KBM-7 (cell line): ENCODE measurements at regions of chr2 and their contacts with region 1.

Region 1: DNA sequence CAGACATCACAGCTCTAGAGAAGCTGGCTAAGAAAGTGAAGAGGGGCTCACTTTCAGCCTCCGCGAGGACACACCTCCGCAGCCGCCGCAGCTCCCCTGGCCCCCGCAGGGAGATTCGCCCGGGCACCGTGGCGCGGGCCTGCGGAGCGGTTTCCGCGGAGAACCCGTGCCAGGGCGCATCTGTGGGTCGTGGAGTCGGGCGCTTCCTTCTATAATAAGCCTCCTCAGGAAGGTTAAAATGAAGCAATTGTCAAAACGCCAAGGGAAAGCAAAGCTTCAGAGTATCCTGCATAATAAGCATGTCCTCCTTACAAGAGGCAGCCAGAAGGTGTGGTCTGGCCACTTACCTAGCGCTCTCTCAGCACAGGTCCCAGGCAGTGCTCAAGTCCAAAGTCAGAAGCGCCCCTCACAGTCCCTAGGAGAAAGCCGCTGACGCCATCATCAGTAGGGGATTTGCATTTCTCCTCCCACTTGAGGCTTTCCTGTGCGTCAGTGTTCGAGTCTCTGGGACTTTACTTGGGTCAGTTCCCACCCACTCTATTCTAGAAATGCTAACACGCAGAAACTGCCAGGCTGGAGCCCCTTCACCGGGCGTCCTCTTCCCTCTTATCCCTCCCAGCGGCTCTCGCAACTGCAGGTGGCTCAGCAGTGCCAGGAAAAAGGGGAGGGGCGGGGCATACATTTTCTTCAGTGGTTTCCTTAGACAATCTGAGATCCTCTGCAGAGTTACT is at the start of gene STAT4:
- DNase-seq: peak; percentile 86

Region 2: DNA sequence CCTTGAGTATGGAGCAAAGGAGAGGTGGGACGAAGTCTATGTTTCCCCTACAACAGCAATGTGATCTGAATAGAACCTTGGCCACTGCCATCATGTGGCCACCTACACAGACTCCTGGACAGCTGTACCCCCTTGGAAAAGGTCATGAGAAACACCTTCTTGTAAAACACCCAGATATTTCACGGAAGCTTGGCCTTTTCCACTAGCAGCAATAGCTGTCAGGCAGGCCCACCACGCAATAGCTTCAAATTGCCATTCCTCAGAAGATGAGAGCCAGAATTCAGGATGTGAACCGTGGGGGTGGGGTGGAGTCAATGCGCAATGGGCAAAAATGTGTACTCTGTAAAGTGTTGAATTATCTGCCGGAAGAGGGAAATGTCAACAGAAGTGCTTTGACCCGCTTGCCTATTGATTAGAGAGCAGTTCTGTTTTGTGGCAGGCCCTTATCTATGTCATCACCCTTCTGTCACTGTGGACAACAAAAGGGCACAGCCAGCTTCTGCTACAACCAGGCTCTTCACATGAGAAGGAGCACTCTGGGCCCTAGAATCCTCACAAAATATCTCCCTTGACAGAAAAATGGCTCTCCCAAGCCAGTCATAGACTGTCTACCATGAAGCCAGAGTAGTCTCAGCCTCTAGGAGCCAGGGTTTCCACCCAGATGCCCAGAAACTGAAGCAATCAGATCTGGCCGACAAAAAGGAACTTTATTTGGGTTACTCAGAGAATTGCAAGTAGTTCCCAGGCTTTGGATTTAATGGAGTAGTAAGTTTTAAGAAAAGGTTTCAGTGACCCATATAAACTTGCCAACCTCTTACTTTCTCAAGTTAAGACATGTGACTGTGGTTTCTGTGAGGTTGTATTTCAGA is 797.9 kb before region 1 on chr2:
- in situ Hi-C with region 1: no loop called
- DNase-seq: peak; percentile 52

Region 3: DNA sequence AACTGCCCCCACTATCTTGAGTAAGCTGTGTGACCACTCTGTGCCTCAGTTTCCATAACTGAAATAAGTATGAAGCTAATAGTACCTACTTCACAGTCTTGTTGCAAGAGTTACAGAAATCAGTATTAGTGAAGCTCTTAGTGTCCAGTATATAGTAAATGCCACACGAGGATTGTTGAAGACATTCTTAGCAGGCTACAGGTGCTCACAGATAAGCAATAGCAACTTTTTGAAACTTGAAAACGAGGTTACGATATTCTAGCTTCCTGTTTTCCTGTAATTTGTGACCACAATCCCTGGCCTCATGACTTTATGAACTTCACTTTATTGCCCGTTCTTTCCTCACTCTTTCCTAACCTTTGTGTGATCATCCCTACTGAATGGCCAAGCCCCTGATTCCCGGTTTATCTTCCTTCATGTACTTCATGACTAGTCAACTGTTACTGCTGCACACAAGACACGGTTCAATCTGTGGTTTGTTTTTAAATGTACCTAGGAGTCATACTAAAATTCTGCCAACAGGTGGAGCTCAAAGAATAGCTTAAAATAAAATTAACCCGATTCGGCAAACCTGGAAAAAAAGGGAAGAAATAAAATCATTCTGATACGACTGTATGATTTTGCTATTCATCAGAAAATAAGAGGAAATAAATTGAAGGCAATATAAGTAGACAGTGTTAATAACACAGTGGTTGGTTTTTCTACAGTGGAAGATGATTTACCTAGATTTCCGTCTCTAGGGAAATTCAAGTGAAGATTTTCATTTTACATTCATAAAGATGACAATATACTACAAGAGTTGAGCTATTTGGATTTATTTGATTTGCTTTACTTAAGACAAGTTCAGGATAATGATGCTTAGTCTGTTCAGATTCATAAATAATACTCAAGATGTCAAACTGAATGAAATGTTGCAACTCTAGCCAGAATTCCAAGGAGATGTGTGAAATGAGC is 98.7 kb before region 1 on chr2:
- in situ Hi-C with region 1: loop called (anchors 10 kb)
- DNase-seq: peak; percentile 88

Region 4: DNA sequence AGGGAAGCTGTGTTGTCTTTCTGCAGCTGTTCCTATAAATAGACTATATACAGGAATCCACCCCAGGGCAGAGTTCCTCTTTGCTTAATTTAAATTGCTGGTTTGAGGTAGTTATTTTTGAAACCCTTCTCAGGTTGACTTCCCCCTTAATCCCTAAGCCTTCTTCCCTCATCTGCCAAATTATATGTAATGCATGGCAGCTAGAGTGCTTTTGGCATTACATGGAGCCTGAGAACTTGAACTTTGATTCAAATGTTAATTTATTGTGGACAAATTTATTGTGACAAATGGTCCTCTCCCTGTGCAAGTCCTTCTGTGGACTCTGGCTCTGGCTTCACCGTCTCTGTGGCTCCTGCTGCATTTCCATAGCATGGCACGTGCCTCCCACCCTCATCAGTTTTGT is 123.6 kb after region 1 on chr2:
- in situ Hi-C with region 1: no loop called
- DNase-seq: peak; percentile 80

Region 5: DNA sequence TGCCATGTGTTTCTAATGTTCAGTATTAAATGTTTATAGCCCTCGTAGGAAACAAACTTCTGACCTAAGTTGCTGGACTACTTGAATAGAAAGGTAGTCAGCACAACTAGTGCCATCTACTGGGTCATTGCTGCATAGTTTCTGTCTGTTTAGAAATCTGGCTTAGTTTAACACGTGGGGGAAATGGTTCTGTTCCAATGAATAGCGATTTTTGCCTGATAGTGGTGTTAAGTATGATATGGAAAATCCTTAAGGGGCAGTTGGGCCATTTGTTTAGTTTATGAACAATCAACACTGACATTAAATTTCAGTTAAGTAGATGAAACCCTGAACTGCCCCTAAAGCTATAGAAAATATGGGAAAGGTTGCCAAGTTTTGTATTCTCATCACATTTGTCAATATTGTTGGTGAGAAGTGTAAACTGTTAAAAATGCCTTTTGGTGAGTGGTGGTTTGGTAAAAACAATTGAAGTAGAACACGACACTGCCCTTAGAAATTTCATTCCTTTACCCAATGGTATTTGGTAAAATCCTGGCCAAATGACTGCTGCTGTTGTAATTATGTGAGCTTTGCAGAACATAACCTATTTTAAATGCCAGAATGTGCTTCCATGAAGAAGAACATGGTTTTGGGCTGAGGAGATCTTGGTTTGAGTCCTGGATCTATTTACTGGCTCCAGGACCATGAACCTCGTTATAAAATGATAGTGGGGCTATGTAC is 540.4 kb after region 1 on chr2:
- in situ Hi-C with region 1: no loop called
- DNase-seq: peak; percentile 87